ENCODE measurements at regions of chr3 and their contacts with region 1.

Region 1: DNA sequence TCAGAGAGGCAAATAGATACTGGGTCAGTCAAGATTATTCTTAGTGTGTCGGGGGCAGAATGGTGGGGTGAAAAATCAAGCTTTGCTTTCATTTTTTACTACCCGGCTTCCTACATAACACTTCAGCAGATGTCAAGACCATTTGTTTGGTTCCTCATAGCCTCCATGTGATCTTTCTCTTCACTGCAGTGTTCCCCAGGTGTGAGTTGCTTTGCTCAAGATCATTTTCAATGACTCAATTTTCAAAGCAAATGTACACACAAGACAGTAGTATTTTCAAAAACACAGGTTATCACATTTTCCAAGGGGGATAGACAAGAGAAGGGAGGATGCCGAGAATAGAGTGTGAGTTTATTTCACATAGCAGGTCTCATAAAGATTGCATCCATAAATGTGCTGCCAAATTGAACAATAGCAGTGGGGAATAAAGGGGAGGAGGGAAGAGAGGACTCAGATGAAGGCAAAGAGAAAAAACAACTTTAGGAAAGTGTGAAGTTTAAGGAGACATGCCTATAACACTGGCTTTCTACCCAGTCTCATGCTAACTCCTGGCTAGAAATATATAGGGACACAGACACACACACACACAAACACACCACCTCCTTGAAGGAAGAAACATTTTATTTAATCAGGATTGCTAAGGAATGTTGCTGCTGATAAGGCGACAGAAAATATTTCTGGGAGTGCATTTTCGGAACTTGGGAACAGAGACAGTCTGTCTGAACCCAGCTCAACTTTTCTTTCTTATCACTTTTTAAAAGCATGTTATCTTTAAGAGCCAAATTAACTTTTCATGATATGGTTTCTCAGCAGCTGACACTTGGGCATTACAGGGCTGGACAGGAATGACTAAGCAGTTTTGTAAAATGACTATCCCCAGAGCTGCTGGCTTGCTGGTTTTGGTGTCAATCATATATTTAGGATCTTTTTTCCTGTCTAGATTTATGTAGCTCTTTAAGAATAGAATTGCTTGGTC is 402.4 kb downstream of the RBMS3 start:
- DNase-seq: peak; percentile 92
- H3K4me3 ChIP-seq: no peak overlapping the region
- H3K27ac ChIP-seq: peak overlapping the region; percentile 94
- H3K4me1 ChIP-seq: peaks cover 40% of the 10 kb centered on the region
- H3K27me3 ChIP-seq: no peaks in the 10 kb centered on the region
- CTCF ChIP-seq: no peak
- POLR2A ChIP-seq: peak; percentile 47

Region 2: GRCh38 chr3:29601861-29602585 is 81.3 kb before region 1 on chr3:
- CTCF ChIA-PET with region 1: interaction called, 3 read pairs
- POLR2A ChIA-PET with region 1: interaction called, 5 read pairs
- dilution Hi-C with region 1: no loop called
- intact Hi-C with region 1: loop called (anchors 1 kb)
- DNase-seq: peak; percentile 97
- H3K4me3 ChIP-seq: no peak overlapping the region
- H3K27ac ChIP-seq: peak overlapping the region; percentile 79
- H3K4me1 ChIP-seq: peaks cover 19% of the 10 kb centered on the region
- H3K27me3 ChIP-seq: no peaks in the 10 kb centered on the region
- CTCF ChIP-seq: no peak
- POLR2A ChIP-seq: peak; percentile 58

Region 3: DNA sequence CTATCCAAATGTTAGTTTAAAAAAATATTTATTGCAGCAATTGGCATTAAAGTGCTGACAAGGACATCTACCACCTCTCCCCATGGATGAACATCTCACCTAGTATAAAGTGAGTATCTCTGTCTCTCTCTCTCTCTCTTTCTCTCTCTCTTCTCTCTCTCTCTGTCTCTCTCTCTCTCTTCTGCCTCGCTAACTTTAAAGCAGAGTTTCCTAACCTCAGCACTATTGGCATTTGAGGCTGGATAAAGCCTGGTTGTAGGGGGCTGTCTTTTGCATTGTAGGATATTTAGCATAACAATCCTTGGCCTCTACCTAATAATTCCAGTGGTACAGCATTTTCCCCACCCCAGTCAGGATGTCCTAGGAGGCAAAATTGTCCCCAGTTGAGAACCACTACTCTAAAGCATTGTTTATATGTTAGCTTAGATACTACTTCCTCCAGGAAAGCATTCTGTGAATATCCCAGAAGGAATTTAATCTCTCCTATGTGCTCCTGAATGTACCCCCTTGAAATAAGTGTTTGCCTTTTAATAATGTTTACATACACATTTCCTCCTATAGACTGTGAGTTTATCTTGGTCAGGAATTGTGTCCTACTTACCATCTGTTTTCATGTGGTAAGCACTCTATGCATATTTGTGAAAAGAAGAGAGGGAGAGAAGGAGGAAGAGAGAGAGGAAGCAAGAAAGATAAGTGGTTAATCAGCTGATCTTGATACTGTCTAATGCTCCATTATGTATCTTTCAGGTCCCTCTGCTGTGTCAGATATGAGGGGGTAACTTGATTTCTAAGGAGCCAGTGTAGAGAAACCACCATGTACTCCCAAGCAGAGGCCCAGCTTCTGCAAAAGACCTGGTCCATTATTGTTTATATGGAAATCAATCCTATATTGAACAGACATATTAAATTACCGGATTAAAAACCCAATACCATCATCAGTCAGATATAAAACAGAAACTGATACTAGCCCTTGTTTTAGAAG is 55.9 kb before region 1 on chr3:
- CTCF ChIA-PET with region 1: no interaction called
- POLR2A ChIA-PET with region 1: no interaction called
- dilution Hi-C with region 1: no loop called
- intact Hi-C with region 1: loop called (anchors 2 kb)
- DNase-seq: peak; percentile 50
- H3K4me3 ChIP-seq: no peak overlapping the region
- H3K27ac ChIP-seq: no peak overlapping the region
- H3K4me1 ChIP-seq: peaks cover 23% of the 10 kb centered on the region
- H3K27me3 ChIP-seq: no peaks in the 10 kb centered on the region
- CTCF ChIP-seq: no peak
- POLR2A ChIP-seq: no peak

Region 4: DNA sequence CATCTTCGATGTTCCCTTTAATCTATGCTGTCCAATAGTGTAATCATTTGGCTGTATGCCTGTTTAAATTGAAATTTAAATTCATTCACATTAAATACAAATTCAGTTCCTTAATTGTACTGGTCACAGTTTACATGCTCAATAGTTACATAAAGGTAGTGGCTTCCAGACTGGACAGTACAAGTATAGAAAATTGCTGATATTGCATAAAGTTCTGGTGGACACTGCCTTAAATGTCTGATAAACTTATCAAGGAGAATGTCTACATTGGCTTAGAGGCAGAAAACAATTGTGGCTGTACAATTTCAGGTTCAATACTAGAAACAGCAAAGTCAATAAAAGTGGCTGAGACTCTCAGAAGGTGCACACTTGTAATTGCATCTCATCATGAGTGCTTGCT is 37.3 kb before region 1 on chr3:
- CTCF ChIA-PET with region 1: no interaction called
- POLR2A ChIA-PET with region 1: no interaction called
- dilution Hi-C with region 1: no loop called
- intact Hi-C with region 1: no loop called
- DNase-seq: no peak
- H3K4me3 ChIP-seq: no peak overlapping the region
- H3K27ac ChIP-seq: no peak overlapping the region
- H3K4me1 ChIP-seq: peaks cover 10% of the 10 kb centered on the region
- H3K27me3 ChIP-seq: no peaks in the 10 kb centered on the region
- CTCF ChIP-seq: no peak
- POLR2A ChIP-seq: no peak

Measured in endothelial cell of umbilical vein (primary cell).